KBM-7 (cell line): ENCODE measurements at regions of chr16 and their contacts with region 1.

Region 1: GRCh38 chr16:48117217-48118105 is 38.3 kb downstream of the ABCC12 start:
- DNase-seq: peak; percentile 87

Region 2: GRCh38 chr16:47141773-47142485 is 975.5 kb before region 1 on chr16:
- in situ Hi-C with region 1: loop called (anchors 25 kb)
- DNase-seq: peak; percentile 83